ENCODE measurements at regions of chr17 and their contacts with region 1.

Region 1: GRCh38 chr17:48593840-48594537 is 410 bp upstream of the HOXB5 start:
- DNase-seq: peak; percentile 71 to 82 (median 77)
- H3K4me3 ChIP-seq: peak overlapping the region in 1 of 2 donors; percentile 30
- H3K4me3 Mint-ChIP-seq: peak overlapping the region; percentile 80 to 92 (median 82)
- H3K27ac ChIP-seq: no peak overlapping the region
- H3K27ac Mint-ChIP-seq: peak overlapping the region in 1 of 7 donors; percentile 74
- H3K4me1 ChIP-seq: peaks cover 46% of the 10 kb centered on the region
- H3K4me1 Mint-ChIP-seq: peaks cover 23 to 55% (median 43%) of the 10 kb centered on the region in 4 donors
- H3K27me3 ChIP-seq: peaks cover 47% of the 10 kb centered on the region
- H3K27me3 Mint-ChIP-seq: peaks cover 44 to 72% of the 10 kb centered on the region in 2 donors

Region 2: GRCh38 chr17:48261297-48261880 is 332.6 kb before region 1 on chr17:
- CTCF ChIA-PET with region 1: interaction called, 31 read pairs
- POLR2A ChIA-PET with region 1: no interaction called
- intact Hi-C with region 1: no loop called
- DNase-seq: no peak
- H3K4me3 ChIP-seq: no peak overlapping the region
- H3K4me3 Mint-ChIP-seq: peak overlapping the region in 1 of 8 donors; percentile 8
- H3K27ac ChIP-seq: no peak overlapping the region
- H3K27ac Mint-ChIP-seq: peak overlapping the region in 2 of 7 donors; percentile 43 to 66
- H3K4me1 ChIP-seq: peaks cover 3% of the 10 kb centered on the region
- H3K4me1 Mint-ChIP-seq: peaks cover 6 to 28% (median 19%) of the 10 kb centered on the region in 4 donors
- H3K27me3 ChIP-seq: no peaks in the 10 kb centered on the region
- H3K27me3 Mint-ChIP-seq: no peaks in the 10 kb centered on the region

Region 3: GRCh38 chr17:48335858-48336500 is 258.0 kb before region 1 on chr17:
- CTCF ChIA-PET with region 1: interaction called, 41 read pairs
- POLR2A ChIA-PET with region 1: interaction called, 4 read pairs
- intact Hi-C with region 1: loop called (anchors 1 kb)
- DNase-seq: peak in 4 of 5 donors; percentile 61 to 70 (median 66)
- H3K4me3 ChIP-seq: no peak overlapping the region
- H3K4me3 Mint-ChIP-seq: no peak overlapping the region
- H3K27ac ChIP-seq: no peak overlapping the region
- H3K27ac Mint-ChIP-seq: peak overlapping the region in 2 of 7 donors; percentile 63 to 65
- H3K4me1 ChIP-seq: no peaks in the 10 kb centered on the region
- H3K4me1 Mint-ChIP-seq: peaks cover 0 to 11% (median 4%) of the 10 kb centered on the region in 4 donors
- H3K27me3 ChIP-seq: no peaks in the 10 kb centered on the region
- H3K27me3 Mint-ChIP-seq: no peaks in the 10 kb centered on the region

Region 4: DNA sequence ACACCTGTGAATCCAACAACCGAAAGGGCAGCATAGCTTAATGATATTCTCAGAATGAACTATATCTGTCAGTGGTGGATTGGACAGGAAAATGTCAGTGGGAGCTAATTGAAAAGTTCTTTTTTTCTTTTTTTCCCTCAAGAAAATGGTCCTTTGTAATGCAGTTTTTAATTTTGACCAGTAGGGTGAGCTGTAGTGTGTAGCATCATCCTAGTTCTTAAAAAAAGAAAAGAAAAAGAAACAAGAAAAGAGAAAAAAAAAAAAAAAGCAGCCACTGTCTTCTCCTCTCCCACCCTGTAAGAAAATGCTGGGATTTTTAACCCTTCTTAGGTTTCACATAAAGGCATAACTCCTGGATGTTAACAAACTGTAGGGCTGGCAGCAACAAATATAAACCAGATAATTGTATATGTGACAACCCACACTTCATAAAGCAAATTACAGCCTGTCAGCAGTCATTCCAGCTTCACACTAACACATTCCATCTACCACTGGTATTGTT is 242.1 kb before region 1 on chr17:
- CTCF ChIA-PET with region 1: interaction called, 59 read pairs
- POLR2A ChIA-PET with region 1: interaction called, 5 read pairs
- intact Hi-C with region 1: no loop called
- DNase-seq: peak in 4 of 5 donors; percentile 31 to 50 (median 43)
- H3K4me3 ChIP-seq: no peak overlapping the region
- H3K4me3 Mint-ChIP-seq: no peak overlapping the region
- H3K27ac ChIP-seq: no peak overlapping the region
- H3K27ac Mint-ChIP-seq: peak overlapping the region in 2 of 7 donors; percentile 35 to 39
- H3K4me1 ChIP-seq: peaks cover 8% of the 10 kb centered on the region
- H3K4me1 Mint-ChIP-seq: peaks cover 5 to 19% (median 8%) of the 10 kb centered on the region in 4 donors
- H3K27me3 ChIP-seq: no peaks in the 10 kb centered on the region
- H3K27me3 Mint-ChIP-seq: no peaks in the 10 kb centered on the region

Region 5: DNA sequence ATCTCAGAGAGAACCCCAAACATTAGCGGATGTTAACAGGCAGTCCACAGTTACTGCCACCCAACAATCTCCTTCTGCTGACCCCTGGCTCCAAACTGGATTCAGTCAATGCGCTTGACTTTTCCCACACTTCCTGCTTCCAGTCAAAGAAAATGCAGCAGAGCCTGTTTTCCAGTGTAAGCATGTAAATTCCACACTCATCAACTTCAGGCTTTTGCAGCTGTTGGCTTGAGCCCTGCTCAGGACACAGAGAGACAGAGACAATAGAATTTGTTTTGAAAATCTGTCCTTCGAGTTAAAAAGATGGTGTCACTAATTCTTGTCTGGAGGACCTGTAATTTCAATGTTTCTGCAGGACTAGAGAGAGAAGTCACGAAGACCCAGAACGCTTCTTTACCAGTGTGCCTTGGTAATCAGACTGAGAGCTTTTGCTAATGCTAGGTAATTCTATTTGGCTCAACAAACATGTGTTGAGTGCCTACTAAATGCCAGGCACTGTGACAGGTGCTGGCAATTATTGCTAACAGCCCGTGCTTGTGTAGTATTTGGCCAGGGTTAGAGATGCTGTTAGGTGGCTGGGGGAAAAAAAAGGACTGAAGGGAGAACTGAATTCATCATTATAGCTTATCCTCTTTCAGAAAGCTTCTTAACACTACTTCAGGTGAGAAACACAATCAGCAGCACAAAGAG is 95.7 kb before region 1 on chr17:
- CTCF ChIA-PET with region 1: interaction called, 46 read pairs
- POLR2A ChIA-PET with region 1: interaction called, 6 read pairs
- intact Hi-C with region 1: no loop called
- DNase-seq: no peak
- H3K4me3 ChIP-seq: no peak overlapping the region
- H3K4me3 Mint-ChIP-seq: no peak overlapping the region
- H3K27ac ChIP-seq: no peak overlapping the region
- H3K27ac Mint-ChIP-seq: peak overlapping the region in 1 of 7 donors; percentile 39
- H3K4me1 ChIP-seq: no peaks in the 10 kb centered on the region
- H3K4me1 Mint-ChIP-seq: no peaks in the 10 kb centered on the region
- H3K27me3 ChIP-seq: no peaks in the 10 kb centered on the region
- H3K27me3 Mint-ChIP-seq: peaks cover 0 to 9% of the 10 kb centered on the region in 2 donors

Region 6: DNA sequence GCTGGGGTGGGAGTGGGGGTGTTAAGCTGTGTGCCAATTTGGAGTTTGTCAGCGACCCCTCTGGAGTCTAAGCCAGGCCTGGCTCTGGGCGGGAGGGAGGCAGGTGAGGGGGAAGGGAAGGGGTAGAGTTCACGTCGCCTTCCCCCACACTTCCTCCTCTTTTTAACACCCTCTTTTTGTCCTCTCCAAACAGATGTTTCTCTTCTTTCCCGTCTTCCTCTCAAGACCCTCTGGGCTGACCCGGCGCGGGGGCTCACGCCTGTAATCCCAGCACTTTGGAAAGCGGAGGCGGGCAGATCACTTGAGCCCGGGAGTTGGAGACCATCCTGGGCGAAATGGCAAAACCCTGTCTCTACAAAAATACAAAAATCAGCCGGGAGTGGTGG is 66.4 kb before region 1 on chr17:
- CTCF ChIA-PET with region 1: no interaction called
- POLR2A ChIA-PET with region 1: no interaction called
- intact Hi-C with region 1: no loop called
- DNase-seq: no peak
- H3K4me3 ChIP-seq: no peak overlapping the region
- H3K4me3 Mint-ChIP-seq: peak overlapping the region in 2 of 8 donors; percentile 43 to 58
- H3K27ac ChIP-seq: no peak overlapping the region
- H3K27ac Mint-ChIP-seq: no peak overlapping the region
- H3K4me1 ChIP-seq: no peaks in the 10 kb centered on the region
- H3K4me1 Mint-ChIP-seq: peaks cover 0 to 11% (median 1%) of the 10 kb centered on the region in 4 donors
- H3K27me3 ChIP-seq: no peaks in the 10 kb centered on the region
- H3K27me3 Mint-ChIP-seq: peaks cover 21 to 30% of the 10 kb centered on the region in 2 donors

Measured in CD4-positive, alpha-beta memory T cell (primary cell).